Right ventricle myocardium inferior (tissue), 1 donor: ENCODE measurements at regions of chr21 and their contacts with region 1.

Region 1: GRCh38 chr21:45129189-45129923 is 55.0 kb downstream of the ADARB1 start:
- DNase-seq: no peak
- ATAC-seq: peak; percentile 80

Region 2: GRCh38 chr21:44892536-44893277 is 236.6 kb before region 1 on chr21:
- intact Hi-C with region 1: loop called (anchors 5 kb)
- DNase-seq: peak; percentile 90
- ATAC-seq: peak; percentile 69

Region 3: GRCh38 chr21:44949779-44950198 is 179.6 kb before region 1 on chr21:
- intact Hi-C with region 1: loop called (anchors 1 kb)
- DNase-seq: peak; percentile 94
- ATAC-seq: peak; percentile 67

Region 4: DNA sequence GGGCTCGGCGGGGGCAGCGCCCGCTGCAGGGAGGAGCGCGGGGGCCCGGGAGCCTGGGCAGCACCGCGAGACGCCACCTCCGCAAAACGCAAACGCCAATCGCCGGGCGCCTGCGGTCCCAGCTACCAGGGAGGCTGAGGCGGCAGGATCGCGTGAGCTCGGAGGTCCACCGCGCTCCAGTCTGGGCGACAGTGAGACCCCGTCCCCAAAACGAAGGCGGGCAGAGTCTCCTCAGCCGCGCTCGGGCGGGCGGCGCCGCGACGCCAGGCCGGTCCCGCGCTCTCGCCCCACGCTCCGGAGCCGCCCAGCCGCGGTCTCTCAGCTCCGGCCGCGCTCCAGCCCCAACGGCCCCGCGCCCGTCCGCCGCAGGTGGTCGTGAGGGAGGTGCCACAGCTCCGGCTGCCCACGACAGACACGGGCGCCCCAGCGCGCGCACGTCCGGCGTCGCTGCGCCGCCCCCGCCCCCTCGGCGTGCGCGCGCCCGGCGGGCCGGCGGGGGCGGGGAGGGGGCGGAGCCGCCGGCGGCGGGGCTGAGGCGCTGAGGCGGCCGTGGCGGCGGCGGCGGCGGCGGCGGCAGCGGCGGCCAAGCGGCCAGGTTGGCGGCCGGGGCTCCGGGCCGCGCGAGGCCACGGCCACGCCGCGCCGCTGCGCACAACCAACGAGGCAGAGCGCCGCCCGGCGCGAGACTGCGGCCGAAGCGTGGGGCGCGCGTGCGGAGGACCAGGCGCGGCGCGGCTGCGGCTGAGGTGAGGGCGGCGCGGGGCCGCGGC is 55.1 kb before region 1 on chr21 and contains the start of gene ADARB1:
- intact Hi-C with region 1: loop called (anchors 2 kb)
- DNase-seq: peak; percentile 85
- ATAC-seq: peak; percentile 71
- total RNA-seq, gene ADARB1: 15.1 TPM

Region 5: DNA sequence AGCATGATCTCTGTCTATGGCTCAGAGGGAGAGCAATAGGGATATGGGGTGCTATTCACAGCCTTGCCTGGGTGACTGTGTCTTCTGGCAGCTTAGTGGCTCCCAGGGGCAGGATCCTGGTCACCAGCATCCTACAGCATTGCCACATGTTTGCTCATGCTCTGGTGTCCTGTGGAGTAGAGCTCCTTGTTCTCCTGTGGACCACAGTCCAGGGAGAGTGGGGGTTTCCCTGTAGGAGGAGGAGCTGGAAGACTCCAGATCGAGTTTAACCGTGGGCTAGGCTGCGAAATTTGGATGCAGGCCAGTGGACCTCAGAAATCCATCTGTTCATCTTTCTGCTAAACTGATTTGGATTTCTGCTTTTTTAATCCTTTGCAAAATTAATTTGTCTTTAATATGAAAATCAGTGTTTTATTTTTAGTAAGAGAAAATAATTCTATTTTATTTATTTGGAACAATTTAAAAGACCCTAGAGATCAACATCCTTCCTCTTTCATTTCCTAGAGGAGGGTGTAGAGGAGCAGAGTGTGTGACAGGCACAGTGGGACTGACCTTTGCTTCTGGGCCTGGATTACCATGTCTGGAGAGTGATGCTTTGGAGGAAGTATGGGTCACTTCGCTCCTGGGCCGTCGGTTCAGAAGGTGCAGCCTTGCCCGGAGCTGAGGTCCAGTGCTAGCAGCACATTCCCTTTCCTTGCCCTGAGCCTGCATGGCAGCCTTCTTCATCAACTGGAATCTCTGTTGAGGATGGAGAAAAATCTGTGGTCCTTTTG is 37.6 kb before region 1 on chr21:
- intact Hi-C with region 1: loop called (anchors 5 kb)
- DNase-seq: no peak
- ATAC-seq: no peak

Region 6: DNA sequence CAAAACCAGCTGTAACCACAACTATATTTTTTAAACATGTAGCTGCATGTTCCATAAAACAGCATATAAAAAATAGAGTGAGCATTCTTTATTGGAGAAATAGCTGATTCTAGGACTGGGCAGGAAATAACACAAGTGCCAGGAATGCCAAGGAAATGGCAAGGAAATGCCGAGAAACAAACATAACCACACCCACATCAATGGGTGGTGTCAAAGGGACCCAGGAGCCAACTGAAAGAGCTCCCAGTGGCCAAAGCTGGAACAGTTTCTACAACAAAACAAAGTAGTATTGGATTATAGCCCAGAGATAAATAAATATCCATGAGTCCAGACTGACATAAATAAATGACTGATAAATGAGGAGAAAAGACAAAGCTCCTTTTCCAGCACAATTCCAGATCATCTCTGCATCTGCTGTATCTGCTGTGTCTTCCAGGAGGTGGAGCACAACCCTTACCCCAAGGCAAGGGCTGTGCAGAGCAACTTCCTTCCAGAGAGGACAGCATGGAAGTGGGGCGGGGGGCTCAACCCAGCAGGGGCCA is 26.9 kb before region 1 on chr21:
- intact Hi-C with region 1: loop called (anchors 2 kb)
- DNase-seq: no peak
- ATAC-seq: no peak